Motor neuron (in vitro differentiated cells): ENCODE measurements at regions of chr2 and their contacts with region 1.

Region 1: DNA sequence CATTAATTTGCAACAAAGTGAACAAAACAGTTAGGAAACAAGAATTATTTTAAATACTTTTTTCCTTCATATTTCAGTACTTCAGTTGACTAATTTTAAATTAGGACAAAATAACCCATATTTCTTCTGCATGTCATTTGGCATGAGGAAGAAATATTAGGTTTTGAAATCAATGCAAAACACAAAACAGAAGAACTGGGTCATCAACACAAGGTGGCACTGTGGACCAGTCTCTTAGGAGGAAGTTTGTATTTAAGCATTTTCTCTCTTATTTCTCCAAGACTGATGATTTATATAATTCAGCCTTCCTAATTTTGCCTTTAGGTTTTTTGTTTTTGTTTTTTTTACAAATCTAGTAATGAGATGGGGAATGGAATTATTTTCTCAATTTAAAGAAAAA is 352.8 kb upstream of the KCNH7 start:
- ATAC-seq: no peak
- H3K4me3 ChIP-seq: no peak overlapping the region
- H3K27ac ChIP-seq: no peak overlapping the region
- H3K4me1 ChIP-seq: no peaks in the 10 kb centered on the region

Region 2: DNA sequence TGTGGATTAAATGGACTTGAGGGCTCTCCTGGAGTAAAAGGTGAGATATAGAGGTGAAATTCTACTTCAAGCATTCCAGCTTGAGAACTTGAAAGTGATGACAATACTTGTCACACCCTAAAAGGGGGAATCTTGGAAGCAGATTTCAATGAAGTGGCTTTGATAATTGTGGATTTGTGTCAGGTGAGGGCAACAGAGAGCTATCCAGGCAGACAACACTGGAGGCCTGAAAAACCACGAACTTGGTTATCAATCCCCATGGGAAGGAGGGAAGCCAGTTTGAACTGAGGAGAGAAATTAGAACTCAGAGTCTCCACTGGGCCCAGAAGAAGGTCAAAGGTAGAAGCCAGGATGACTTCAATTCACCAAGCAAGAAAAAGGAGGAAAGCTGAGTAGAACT is 280.6 kb after region 1 on chr2:
- in situ Hi-C with region 1: loop called in 2 of 9 experiments (anchors 25 kb)
- ATAC-seq: peak in 3 of 8 experiments; percentile 20 to 54 (median 24)
- H3K4me3 ChIP-seq: no peak overlapping the region
- H3K27ac ChIP-seq: no peak overlapping the region
- H3K4me1 ChIP-seq: peaks cover 0 to 5% of the 10 kb centered on the region in 2 donors

Region 3: DNA sequence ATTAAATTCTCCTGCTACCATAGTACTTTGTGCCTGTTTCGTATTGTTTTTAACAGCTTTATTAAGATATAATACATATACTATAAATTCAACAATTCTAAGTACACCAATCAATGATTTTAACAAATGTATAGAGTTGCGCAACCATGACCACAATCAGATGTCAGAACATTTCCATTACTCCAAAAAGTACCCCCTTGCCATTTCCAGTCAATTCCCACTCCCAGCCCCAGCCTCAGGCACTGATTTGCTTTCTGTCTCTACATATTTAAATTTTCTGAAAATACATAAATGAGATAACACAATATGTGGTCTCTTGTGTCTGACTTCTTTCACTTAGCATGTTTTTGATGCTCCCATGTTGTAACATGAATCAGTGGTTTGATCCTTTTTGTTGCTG is 350.6 kb after region 1 on chr2:
- in situ Hi-C with region 1: no loop called
- ATAC-seq: peak in 3 of 8 experiments; percentile 72 to 85 (median 83)
- H3K4me3 ChIP-seq: no peak overlapping the region
- H3K27ac ChIP-seq: no peak overlapping the region
- H3K4me1 ChIP-seq: no peaks in the 10 kb centered on the region

Region 4: DNA sequence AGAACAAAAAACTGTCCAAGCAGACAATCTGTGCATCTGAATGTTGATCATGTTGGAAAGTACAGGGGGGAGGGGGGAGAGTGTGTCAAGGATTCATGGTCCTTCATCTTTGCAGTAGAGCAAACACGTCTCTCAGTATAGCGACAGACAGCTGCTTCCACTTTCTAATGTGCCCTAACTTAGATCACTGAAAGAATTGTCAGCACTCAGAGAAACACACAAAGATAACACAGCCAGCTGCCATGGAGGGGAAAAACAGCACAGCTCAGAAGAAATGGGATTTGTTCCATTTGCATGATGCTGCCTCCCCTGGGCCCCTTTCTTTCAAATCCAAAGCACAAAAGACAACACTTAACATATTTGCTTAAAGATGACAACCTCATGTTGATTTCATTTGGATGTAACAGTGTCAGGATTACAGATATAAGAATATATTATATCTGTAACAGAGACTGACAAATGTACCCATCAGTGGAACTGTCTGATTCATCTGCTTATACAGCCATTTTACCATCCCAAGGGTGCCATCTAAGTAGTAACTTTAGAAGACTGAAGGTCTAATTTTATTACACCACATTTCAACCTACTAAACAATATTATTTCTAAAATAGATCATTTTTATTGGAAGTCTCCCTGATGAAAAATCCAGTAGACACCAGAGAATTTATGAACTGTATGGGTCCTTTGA is 526.8 kb after region 1 on chr2:
- in situ Hi-C with region 1: no loop called
- ATAC-seq: peak in 5 of 8 experiments; percentile 70 to 81 (median 80)
- H3K4me3 ChIP-seq: peak overlapping the region in 3 of 5 donors; percentile 6 to 13 (median 10)
- H3K27ac ChIP-seq: peak overlapping the region; percentile 40 to 63
- H3K4me1 ChIP-seq: peaks cover 37 to 73% of the 10 kb centered on the region in 2 donors

Region 5: DNA sequence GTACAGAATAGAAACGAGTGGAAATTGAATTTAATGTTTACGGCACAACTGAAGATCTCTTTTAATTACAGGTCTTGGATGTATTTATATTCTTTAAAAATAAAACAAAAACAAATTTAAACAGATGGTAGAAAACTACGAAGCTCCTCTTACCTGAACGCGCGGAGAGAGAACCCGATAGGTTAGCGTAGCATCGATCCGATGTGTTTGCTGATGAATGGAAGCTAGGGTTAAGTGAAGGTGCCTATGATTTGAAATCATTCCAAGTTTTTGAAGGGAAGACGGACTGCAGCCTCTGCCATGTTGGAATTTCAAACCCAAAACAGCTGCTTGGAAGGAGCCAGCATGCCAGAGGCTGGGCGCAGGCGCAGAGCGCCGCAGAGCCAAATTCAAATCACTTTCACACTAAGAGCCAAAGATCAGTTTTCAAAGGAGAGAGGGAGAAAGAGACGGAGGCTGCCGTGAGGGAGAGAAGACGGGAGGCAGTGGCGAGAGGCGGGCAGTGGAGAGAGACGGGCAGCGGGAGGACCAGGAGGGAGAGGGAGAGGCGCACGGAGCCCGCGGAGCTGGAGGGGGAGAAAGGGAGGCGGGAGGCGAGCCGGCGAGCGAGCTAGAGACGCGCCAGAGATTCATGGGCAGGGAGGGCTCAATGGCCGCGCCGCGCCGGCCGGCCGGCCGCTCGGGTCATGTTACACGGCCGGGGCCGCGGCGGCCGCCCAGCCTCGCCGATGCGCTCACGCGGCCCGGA is 544.5 kb after region 1 on chr2 and contains the start of gene FIGN:
- in situ Hi-C with region 1: loop called in 1 of 9 experiments (anchors 25 kb)
- ATAC-seq: peak; percentile 69 to 85 (median 80)
- H3K4me3 ChIP-seq: peak within 1 kb of the TSS; percentile 56 to 96 (median 67)
- H3K27ac ChIP-seq: peak within 1 kb of the TSS; percentile 81 to 86
- H3K4me1 ChIP-seq: peaks cover 5 to 24% of the 10 kb centered on the region in 2 donors
- total RNA-seq, gene FIGN: 2.3 to 14.8 (median 8.6) TPM

Region 6: DNA sequence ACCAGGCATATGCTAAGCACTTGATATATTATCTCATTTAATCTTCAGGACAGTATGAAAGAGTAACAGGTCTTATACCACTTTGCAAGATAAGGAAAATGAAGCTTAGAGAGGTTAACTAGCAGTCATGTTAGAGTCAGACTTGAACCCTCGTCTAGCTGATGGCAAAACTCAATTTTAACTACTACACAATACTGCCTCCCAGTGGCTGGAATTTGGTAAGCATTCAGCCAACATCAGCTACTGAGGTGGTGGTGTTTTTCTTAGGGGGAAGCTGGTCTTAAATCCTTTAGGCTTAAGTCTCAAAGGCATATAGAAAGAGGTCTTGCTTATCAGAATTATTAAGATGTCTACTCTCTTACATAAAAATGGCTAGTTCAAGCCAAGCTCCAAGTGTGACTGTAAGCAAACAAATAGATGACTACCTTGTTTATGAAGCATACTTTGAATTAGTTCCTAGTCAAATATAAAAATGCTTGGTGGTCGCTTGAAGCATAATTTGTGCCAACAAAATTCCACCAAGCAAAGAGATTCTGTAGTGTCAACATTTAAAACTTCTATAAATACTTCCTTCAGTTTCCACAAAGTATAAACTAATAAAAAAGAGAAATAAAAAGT is 869.9 kb after region 1 on chr2:
- in situ Hi-C with region 1: loop called in 1 of 9 experiments (anchors 25 kb)
- ATAC-seq: peak in 2 of 8 experiments; percentile 29 to 46
- H3K4me3 ChIP-seq: no peak overlapping the region
- H3K27ac ChIP-seq: no peak overlapping the region
- H3K4me1 ChIP-seq: no peaks in the 10 kb centered on the region

Region 7: GRCh38 chr2:164495491-164496223 is 1304.3 kb after region 1 on chr2:
- in situ Hi-C with region 1: loop called in 7 of 9 experiments (anchors 25 kb)
- ATAC-seq: peak in 6 of 8 experiments; percentile 56 to 98 (median 86)
- H3K4me3 ChIP-seq: no peak overlapping the region
- H3K27ac ChIP-seq: no peak overlapping the region
- H3K4me1 ChIP-seq: peaks cover 0 to 3% of the 10 kb centered on the region in 2 donors